AG04449 (cell line): ENCODE measurements at regions of chr7 and their contacts with region 1.

Region 1: DNA sequence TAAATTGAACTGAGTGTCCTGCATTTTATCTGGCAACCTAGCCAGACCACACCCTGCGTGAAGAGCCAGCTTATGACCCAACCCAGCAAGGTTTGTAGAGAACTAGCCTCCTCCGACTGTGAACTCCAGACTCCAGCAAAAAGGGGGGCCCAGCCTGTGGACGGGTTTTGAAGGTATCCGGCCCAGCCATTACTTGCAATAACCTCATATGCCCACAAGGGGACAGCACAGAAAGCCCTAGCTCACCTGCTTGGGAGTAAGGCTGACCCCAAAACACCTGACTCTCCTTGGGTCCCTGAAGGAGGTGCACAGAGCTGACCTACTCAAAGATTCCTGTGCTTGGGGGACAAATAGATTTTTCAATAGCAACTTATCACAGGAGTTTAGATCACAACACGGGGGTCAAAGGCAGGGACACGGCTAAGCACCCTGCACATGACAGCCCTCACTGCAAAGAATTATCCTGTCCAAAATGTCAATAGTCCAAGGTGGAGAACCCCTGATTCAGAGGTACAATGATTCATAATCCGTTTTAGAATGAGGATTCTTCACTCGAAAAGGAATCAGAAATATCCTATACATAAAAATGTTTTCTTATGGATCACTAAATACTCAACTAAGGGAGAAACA is 4.6 kb downstream of the TRPV6 start:
- DNase-seq: no peak
- H3K4me3 ChIP-seq: no peak overlapping the region
- CTCF ChIP-seq: peak; percentile 60

Region 2: GRCh38 chr7:142842251-142842766 is 38.7 kb before region 1 on chr7:
- CTCF ChIA-PET with region 1: no interaction called
- POLR2A ChIA-PET with region 1: no interaction called
- DNase-seq: no peak
- H3K4me3 ChIP-seq: no peak overlapping the region
- CTCF ChIP-seq: no peak

Region 3: DNA sequence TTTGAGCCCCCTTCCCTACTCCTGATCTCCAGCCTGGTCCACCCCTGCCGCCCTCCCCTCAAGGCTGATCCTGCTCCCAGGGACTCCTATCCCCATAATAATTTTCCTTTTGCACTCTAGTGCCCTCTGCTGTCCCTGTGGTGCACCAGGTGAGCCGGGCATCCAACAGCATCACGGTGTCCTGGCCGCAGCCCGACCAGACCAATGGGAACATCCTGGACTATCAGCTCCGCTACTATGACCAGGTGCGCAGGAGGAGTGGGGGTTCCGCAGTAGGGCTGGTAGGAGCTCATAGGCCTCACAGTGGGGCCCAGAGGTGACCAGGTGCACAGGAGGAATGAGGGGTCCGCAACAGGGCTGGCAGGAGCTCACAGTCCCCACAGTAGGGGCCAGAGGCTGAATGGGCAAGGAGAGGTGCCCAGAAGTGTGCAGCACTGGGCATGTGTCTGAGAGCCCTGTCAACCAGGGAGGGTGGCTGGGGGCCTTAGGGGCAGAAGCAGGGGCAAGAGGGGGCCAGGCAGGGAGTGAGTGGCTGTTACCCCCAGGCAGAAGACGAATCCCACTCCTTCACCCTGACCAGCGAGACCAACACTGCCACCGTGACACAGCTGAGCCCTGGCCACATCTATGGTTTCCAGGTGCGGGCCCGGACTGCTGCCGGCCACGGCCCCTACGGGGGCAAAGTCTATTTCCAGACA is 14.5 kb before region 1 on chr7:
- CTCF ChIA-PET with region 1: interaction called, 27 read pairs
- POLR2A ChIA-PET with region 1: no interaction called
- DNase-seq: no peak
- H3K4me3 ChIP-seq: no peak overlapping the region
- CTCF ChIP-seq: peak; percentile 62

Region 4: DNA sequence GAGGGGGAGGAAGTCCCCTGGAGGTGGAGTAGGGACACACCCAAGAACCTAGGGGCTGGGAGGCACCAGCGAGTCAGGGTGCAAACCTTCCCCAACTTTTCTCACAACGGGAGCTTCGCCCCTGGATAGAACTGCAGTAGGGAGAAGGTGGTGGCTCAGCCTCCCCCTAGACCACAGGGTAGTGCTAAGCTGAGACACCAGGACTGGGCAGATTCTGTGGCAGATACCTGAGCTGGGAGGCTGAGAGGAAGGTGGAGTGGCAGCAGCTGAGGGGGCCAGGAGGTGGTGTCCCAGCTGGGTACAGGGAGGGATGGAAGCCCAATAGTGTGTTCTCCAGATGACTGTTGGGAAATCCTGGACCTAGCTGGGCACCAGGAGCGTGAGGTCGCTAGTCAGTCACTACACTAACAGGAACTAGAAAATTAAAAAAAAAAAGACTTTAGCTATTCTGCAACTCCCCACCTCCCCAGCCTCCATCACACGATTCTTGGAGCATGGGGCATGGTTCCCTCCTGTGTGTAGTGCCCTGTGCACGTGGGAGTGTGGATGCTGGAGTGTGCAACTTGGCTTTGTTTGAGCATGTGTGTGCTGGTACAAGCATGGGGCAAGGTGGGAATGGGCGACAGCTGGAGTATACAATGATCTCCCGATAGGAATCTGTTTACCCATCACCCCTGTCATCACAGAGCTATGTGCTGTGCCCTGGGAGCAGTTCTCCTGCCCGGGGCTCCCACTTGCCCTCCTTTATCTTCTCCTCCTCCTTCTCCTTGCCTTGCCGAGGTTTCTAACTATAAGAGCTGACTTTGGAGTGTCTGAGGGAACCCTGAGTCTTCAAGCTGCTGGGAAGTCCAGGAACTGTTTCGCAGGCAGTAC is 13.4 kb after region 1 on chr7:
- CTCF ChIA-PET with region 1: interaction called, 11 read pairs
- POLR2A ChIA-PET with region 1: no interaction called
- DNase-seq: no peak
- H3K4me3 ChIP-seq: no peak overlapping the region
- CTCF ChIP-seq: no peak